Naive thymus-derived CD4-positive, alpha-beta T cell (primary cell): ENCODE measurements at regions of chr1 and their contacts with region 1.

Region 1: DNA sequence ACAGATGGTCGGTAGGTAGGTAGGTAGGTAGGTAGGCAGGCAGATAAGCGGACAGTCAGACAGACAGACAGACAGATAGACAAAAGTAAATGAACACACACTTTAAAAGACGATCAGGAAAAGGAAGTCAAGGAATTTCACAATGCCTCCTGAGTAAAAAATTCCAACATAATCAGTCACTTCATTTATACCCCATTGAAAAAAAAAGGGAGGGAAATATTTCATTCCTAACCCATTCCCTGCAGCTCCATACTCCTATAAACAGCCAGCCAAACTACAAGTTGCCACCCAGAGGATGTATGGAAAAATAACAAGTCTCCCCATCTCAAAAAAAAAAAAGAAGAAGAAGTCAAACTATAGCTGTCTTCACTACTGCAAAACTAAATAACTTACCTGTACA is 43.4 kb downstream of the ZZZ3 start:
- DNase-seq: no peak
- ATAC-seq: no peak
- H3K4me3 ChIP-seq: no peak overlapping the region
- H3K4me3 Mint-ChIP-seq: no peak overlapping the region
- H3K27ac ChIP-seq: no peak overlapping the region
- H3K27ac Mint-ChIP-seq: peak overlapping the region in 3 of 9 donors; percentile 6 to 48 (median 44)
- H3K4me1 ChIP-seq: no peaks in the 10 kb centered on the region
- H3K4me1 Mint-ChIP-seq: peaks cover 8 to 38% (median 26%) of the 10 kb centered on the region in 7 donors
- H3K27me3 ChIP-seq: no peaks in the 10 kb centered on the region
- H3K27me3 Mint-ChIP-seq: no peaks in the 10 kb centered on the region

Region 2: DNA sequence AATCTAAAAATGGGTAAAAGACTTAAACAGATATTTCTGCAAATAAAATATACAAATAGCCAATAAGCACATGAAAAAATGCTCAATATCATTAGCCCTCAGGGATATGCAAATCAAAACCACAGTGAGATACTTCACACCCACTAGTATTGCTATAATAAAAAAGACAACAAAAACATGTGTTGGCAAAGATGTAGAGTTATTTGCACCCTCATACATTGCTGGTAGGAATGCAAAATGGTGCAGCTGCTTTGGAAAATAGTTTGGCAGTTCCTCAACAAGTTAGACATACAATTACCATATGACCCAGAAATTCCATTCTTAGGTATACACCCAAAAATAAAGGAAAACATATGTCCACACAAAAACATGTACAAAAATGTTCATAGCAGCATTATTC is 13.2 kb after region 1 on chr1:
- CTCF ChIA-PET with region 1: interaction called, 3 read pairs
- POLR2A ChIA-PET with region 1: no interaction called
- intact Hi-C with region 1: loop called in 1 of 2 experiments (anchors 2 kb)
- DNase-seq: no peak
- ATAC-seq: no peak
- H3K4me3 ChIP-seq: no peak overlapping the region
- H3K4me3 Mint-ChIP-seq: peak overlapping the region in 2 of 10 donors; percentile 11 to 38
- H3K27ac ChIP-seq: no peak overlapping the region
- H3K27ac Mint-ChIP-seq: peak overlapping the region in 3 of 9 donors; percentile 20 to 64 (median 43)
- H3K4me1 ChIP-seq: no peaks in the 10 kb centered on the region
- H3K4me1 Mint-ChIP-seq: peaks cover 6 to 54% (median 34%) of the 10 kb centered on the region in 7 donors
- H3K27me3 ChIP-seq: no peaks in the 10 kb centered on the region
- H3K27me3 Mint-ChIP-seq: no peaks in the 10 kb centered on the region

Region 3: DNA sequence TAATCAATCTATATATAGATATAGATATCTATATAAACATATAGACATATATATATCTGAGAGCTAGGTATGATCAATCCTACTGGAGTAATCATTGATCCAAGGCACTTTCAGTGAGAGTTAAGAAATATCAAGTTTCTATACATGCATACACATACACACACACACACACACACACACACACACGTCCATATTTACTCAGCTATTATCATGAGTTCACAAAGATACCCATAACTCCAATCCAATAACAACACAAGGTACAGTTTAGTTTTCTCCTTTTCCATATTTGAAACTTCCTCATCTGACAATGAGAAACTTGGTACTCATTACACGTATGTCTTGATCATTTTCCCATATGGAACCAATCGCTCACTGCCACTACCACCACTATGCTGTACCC is 70.7 kb after region 1 on chr1:
- CTCF ChIA-PET with region 1: no interaction called
- POLR2A ChIA-PET with region 1: no interaction called
- intact Hi-C with region 1: no loop called
- DNase-seq: no peak
- ATAC-seq: no peak
- H3K4me3 ChIP-seq: no peak overlapping the region
- H3K4me3 Mint-ChIP-seq: no peak overlapping the region
- H3K27ac ChIP-seq: no peak overlapping the region
- H3K27ac Mint-ChIP-seq: peak overlapping the region in 3 of 9 donors; percentile 2 to 37 (median 7)
- H3K4me1 ChIP-seq: no peaks in the 10 kb centered on the region
- H3K4me1 Mint-ChIP-seq: no peaks in the 10 kb centered on the region
- H3K27me3 ChIP-seq: no peaks in the 10 kb centered on the region
- H3K27me3 Mint-ChIP-seq: no peaks in the 10 kb centered on the region